ENCODE measurements at regions of chr3 and their contacts with region 1.

Region 1: GRCh38 chr3:192816351-192816750 is 89.0 kb upstream of the FGF12 start:
- DNase-seq: no peak
- H3K4me3 ChIP-seq: no peak overlapping the region
- H3K27ac ChIP-seq: no peak overlapping the region
- H3K4me1 ChIP-seq: no peaks in the 10 kb centered on the region
- H3K27me3 ChIP-seq: no peaks in the 10 kb centered on the region
- CTCF ChIP-seq: peak; percentile 71 to 76 (median 72)
- POLR2A ChIP-seq: no peak

Region 2: DNA sequence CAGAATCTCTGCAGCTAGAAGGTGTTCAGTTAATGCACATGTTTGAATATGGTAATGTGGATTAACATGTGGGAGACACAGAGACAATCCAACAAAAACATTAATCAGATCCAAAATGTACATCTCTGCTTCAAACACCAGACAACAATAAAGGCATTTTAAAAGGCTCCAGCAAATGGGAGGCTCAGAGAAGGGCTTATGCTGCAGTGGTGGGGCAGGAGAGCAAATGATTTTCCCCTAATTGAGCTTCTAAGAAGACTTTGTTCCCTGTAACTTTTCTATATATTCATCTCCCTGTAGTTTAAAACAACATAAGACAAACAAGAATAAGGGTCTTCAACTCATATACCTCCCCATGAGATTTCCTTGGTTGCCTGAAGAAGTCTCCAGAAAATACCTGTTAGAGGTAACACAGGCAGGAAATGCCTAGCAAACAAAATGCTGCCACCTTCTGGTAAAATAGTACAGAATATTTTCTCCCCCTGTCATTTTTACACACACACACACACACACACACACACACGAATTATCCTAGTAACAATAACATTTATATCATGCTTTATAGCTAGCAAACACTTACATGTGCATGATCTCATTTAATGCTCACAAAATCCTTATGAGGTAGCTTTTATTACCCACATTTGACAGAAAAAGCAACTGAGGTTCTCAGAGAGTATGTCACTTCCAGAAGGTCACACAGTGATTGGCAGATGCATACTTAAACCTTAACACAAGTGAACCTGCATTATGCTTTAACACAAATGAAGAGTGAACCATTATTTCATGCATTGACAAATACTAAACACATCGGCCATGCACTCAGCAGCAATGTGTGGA is 224.7 kb after region 1 on chr3:
- intact Hi-C with region 1: loop called (anchors 10 kb)
- DNase-seq: no peak
- H3K4me3 ChIP-seq: no peak overlapping the region
- H3K27ac ChIP-seq: no peak overlapping the region
- H3K4me1 ChIP-seq: no peaks in the 10 kb centered on the region
- H3K27me3 ChIP-seq: no peaks in the 10 kb centered on the region
- CTCF ChIP-seq: peak in 2 of 3 experiments; percentile 30 to 50
- POLR2A ChIP-seq: no peak